BJ (cell line): ENCODE measurements at regions of chr7 and their contacts with region 1.

Region 1: DNA sequence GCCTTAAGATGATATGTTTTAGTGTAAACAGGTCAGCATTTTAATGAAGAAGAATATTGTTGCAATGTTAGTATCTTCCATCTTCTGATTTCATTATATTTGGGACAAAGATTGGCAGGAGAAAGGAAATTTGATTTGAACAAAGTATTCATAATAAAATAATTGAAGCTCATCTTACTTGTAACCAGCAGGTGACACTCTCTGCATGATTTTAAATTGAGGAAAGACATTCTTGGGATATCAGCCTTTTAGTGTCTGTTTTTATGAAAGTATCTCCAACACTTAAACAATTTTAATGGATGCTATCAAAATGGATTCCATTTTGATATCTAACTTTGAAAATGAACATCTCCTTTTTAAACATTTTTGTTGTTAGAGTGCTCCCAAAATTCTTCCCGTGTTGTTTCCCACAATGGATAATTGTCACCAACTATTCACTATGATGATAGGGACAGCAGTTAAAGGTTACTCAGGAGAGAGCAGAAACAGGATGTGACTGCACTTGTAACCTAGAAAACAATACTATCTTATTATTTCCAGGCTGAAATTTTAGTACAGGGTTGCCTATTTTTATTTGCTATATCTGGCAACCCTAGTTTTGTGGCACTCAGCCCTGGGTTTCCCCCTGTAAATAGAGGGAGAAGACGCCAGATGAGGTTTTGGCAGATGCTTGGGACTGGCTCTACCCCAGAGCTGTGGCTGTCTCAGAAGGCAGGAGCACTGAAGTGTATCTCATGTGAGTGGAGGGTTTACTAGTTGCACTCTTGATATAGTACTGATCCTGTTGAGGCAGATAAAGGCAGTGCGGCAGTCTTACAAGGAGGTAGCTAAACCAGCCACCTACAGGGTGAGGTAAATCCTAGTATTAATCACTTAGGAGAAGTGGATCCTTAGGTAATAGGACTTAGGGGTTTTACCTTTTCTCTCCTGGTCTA is 31.0 kb upstream of the ABCB4 start:
- DNase-seq: no peak
- H3K4me3 ChIP-seq: no peak overlapping the region
- H3K27me3 ChIP-seq: no peaks in the 10 kb centered on the region
- CTCF ChIP-seq: peak; percentile 44

Region 2: DNA sequence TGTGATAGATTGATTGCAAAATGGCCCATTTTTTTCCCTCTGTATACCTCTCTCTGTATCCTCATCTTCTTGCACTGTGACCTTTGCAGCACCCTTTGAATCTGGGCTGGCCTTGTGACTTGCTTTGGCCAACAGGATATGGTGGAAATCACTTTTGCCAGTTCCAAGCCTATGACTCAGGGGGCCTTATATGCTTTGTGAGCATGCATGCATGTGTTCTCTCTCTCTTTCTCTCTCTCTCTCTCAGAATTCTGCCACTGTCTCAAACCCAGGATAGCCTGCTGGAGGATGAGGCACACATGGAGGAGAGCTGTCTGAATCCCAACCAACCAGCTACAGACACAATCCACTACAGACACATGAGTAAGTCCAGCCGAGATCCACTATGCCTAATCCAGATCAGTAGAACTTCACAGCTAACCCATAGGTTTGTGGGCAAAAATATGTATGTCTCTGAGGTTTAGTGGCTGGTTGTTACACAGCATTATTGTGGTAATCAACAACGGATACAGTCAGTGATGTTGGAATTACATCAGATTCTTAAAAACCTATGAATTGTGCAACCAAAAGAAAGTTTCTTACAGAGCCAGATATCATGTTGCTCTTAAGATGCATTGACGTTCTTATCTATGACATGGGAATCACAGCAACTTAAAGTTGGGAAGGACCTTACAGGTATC is 10.8 kb after region 1 on chr7:
- CTCF ChIA-PET with region 1: interaction called, 17 read pairs
- POLR2A ChIA-PET with region 1: no interaction called
- DNase-seq: no peak
- H3K4me3 ChIP-seq: no peak overlapping the region
- H3K27me3 ChIP-seq: no peaks in the 10 kb centered on the region; the same call in 1 of the 2 replicates
- CTCF ChIP-seq: no peak

Region 3: DNA sequence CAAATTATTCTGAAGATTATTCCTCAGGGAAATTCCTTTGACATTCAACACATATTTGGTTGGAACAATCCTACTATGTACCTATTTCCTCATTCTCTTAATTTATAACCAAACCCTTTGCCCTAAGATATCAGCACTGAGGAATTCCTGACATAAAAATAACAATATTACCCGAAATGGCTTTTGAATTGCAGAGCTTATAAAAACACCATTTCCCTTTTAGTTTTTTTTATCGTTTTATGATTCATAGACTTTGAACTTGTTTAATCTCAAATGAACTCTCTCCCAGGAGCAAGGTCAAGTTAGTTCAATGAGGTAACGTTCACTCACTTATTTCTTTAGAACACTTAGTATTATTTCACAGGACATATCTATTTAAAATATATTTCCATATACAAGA is 101.9 kb after region 1 on chr7:
- CTCF ChIA-PET with region 1: no interaction called
- POLR2A ChIA-PET with region 1: no interaction called
- DNase-seq: no peak
- H3K4me3 ChIP-seq: no peak overlapping the region
- H3K27me3 ChIP-seq: no peaks in the 10 kb centered on the region
- CTCF ChIP-seq: no peak

Region 4: DNA sequence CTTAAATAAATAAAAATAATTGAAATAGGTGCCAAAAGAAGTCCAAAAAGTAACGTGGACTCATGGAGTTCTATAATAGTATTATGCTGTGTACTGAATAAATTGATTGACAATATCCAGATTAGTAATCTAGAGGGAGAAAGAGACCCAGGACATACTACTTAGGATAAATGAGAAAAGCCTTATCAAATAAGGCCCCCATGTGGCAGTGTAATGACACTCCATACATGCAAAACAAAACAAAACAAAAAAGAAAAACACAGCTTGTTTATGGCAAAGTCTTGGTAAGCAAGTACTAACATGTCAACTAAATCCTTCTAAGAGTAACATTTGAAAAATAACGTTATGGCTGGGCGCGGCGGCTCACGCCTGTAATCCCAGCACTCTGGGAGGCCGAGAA is 118.1 kb after region 1 on chr7:
- CTCF ChIA-PET with region 1: no interaction called
- POLR2A ChIA-PET with region 1: no interaction called
- DNase-seq: no peak
- H3K4me3 ChIP-seq: no peak overlapping the region
- H3K27me3 ChIP-seq: peaks cover 3% of the 10 kb centered on the region; the same call in 1 of the 2 replicates
- CTCF ChIP-seq: no peak

Region 5: DNA sequence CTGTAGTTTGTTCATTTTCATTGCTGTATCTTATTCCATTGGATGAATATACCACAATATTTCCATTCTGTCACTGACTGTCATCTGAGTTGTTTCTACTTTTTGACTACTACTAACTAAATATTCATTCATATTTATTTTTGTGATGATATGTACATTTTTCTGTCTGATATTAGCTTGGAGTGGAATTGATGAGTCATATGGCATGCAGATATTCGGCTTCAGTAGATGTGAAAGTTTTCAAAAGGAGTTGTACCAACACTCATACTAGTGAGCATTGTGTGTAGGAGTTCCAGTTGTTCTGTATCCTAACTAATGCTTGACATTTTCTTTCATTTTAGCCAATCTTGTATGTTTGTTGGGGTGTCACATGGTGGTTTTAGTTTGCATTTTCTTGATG is 129.4 kb after region 1 on chr7:
- CTCF ChIA-PET with region 1: no interaction called
- POLR2A ChIA-PET with region 1: no interaction called
- DNase-seq: no peak
- H3K4me3 ChIP-seq: no peak overlapping the region
- H3K27me3 ChIP-seq: no peaks in the 10 kb centered on the region
- CTCF ChIP-seq: no peak

Region 6: GRCh38 chr7:88111136-88111743 is 604.7 kb after region 1 on chr7:
- CTCF ChIA-PET with region 1: interaction called, 13 read pairs
- POLR2A ChIA-PET with region 1: no interaction called
- DNase-seq: peak; percentile 7
- H3K4me3 ChIP-seq: no peak overlapping the region
- H3K27me3 ChIP-seq: no peaks in the 10 kb centered on the region; the same call in 1 of the 2 replicates
- CTCF ChIP-seq: peak; percentile 50